ENCODE measurements at regions of chr10 and their contacts with region 1.

Region 1: GRCh38 chr10:118241229-118242137 is 100.6 kb downstream of the FAM204A start:
- DNase-seq: peak; percentile 72 to 83
- ATAC-seq: peak; percentile 62 to 86 (median 66)
- H3K4me3 ChIP-seq: no peak overlapping the region
- H3K27ac ChIP-seq: no peak overlapping the region
- H3K4me1 ChIP-seq: no peaks in the 10 kb centered on the region
- H3K27me3 ChIP-seq: peaks cover 3 to 63% (median 3%) of the 10 kb centered on the region in 3 donors
- CTCF ChIP-seq: peak; percentile 93

Region 2: DNA sequence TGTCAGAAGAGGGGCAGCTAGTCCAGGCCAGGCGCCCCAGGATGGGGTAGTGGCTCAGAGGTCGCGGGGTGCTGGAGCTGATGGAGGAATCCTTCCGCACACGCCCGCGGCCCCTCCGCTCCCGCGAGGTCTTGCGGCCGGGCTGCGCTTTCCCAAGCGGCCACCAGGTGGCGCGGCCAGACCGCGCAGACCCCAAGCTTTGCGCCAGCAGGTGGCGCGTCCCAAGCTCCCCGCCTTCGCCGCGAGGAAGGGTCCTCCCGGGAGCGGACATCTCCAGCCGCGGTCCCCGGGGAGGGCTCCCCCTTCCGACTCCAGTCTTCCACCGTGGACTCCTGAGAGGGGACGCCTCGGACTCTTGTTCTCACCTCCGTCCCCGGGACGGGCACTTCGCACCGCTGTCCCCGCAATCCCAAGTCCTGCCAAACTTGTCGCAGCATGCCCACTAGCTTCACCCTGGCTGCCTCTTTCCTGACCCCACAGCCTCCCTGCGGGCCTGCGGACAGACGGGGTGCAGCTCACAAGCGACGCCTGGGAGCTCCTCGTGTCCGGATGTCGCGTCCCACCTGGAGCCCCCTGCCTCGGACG is 1024.8 kb before region 1 on chr10:
- intact Hi-C with region 1: loop called (anchors 10 kb)
- DNase-seq: peak; percentile 66 to 84
- ATAC-seq: peak; percentile 88 to 98 (median 91)
- H3K4me3 ChIP-seq: peak overlapping the region; percentile 55
- H3K27ac ChIP-seq: no peak overlapping the region
- H3K4me1 ChIP-seq: peaks cover 5% of the 10 kb centered on the region
- H3K27me3 ChIP-seq: peaks cover 0 to 51% (median 18%) of the 10 kb centered on the region in 3 donors
- CTCF ChIP-seq: peak; percentile 100

Region 3: DNA sequence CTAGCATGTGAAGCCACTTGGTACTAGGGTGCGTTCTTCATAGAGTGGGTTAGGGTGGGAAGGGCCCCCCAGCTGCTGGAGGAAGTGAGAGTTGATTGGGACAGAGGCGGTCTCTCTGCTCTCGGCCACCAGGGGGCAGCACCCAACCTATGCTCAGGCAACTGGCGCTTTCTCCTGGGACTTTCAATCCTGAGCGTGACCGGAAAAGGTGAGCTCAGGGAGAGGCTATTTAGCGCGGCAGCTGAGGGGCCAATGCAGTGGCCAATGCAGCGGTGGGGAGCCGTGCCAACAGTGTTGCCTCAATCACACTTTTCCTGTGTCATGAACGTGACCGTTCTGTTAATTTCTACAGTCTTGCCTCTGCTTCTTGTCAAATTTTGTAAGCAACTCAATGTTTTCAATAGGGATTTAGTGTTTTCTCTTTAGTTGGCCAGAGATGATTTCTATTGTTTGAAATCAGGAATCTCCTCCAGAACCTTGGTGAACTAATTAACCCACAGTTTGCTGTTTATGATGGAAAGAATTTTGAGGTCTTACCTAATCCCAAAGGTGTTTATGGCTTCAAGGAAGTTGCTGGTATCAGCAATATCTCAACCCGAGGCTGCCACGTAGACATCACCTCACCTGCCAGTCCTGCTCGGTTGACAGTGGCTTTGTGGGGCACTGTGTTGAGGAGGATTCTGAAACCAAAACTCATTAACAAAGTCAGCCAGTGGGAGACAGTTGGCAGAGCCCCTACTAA is 798.4 kb before region 1 on chr10:
- intact Hi-C with region 1: loop called in 1 of 2 experiments (anchors 5 kb)
- DNase-seq: peak; percentile 80 to 90
- ATAC-seq: peak; percentile 73 to 83 (median 80)
- H3K4me3 ChIP-seq: peak overlapping the region; percentile 37
- H3K27ac ChIP-seq: no peak overlapping the region
- H3K4me1 ChIP-seq: no peaks in the 10 kb centered on the region
- H3K27me3 ChIP-seq: peaks cover 0 to 6% (median 3%) of the 10 kb centered on the region in 3 donors
- CTCF ChIP-seq: peak; percentile 77

Region 4: GRCh38 chr10:117496616-117497028 is 744.9 kb before region 1 on chr10:
- intact Hi-C with region 1: loop called (anchors 1 to 2 kb)
- DNase-seq: peak; percentile 70 to 85
- ATAC-seq: peak; percentile 88 to 97 (median 91)
- H3K4me3 ChIP-seq: no peak overlapping the region
- H3K27ac ChIP-seq: no peak overlapping the region
- H3K4me1 ChIP-seq: no peaks in the 10 kb centered on the region
- H3K27me3 ChIP-seq: peaks cover 0 to 9% (median 0%) of the 10 kb centered on the region in 3 donors
- CTCF ChIP-seq: peak; percentile 96

Region 5: DNA sequence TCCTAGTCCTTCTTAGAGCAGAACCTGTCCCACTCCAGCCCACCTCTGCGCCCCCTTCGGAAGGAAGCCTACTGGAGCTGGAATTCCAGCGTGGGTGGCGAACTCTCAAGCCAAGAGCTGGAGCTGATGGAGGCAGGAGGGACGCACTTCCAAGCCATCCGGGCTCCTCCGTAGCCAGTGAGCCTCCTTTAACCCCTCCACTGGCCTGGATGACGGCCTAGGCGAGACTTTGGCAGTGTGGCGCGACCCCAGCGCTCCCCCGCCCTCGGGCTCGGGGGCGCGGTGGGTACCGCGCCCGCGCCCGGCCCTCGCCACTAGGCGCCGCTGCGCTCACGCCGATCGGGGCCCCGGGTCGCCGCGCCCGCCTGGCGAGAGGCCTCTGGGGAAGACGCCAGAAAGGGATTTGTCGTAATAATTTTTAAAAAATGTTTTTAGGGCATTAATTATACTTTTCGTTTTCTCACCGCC is 704.0 kb before region 1 on chr10:
- intact Hi-C with region 1: loop called (anchors 5 kb)
- DNase-seq: peak in 1 of 2 donors; percentile 70
- ATAC-seq: peak; percentile 58 to 72 (median 63)
- H3K4me3 ChIP-seq: peak overlapping the region; percentile 56
- H3K27ac ChIP-seq: no peak overlapping the region
- H3K4me1 ChIP-seq: peaks cover 3% of the 10 kb centered on the region
- H3K27me3 ChIP-seq: peaks cover 0 to 98% (median 32%) of the 10 kb centered on the region in 3 donors
- CTCF ChIP-seq: peak; percentile 80

Region 6: GRCh38 chr10:118163217-118163616 is 78.3 kb before region 1 on chr10:
- intact Hi-C with region 1: no loop called
- DNase-seq: peak in 1 of 2 donors; percentile 65
- ATAC-seq: no peak
- H3K4me3 ChIP-seq: no peak overlapping the region
- H3K27ac ChIP-seq: no peak overlapping the region
- H3K4me1 ChIP-seq: no peaks in the 10 kb centered on the region
- H3K27me3 ChIP-seq: no peaks in the 10 kb centered on the region
- CTCF ChIP-seq: no peak

Region 7: DNA sequence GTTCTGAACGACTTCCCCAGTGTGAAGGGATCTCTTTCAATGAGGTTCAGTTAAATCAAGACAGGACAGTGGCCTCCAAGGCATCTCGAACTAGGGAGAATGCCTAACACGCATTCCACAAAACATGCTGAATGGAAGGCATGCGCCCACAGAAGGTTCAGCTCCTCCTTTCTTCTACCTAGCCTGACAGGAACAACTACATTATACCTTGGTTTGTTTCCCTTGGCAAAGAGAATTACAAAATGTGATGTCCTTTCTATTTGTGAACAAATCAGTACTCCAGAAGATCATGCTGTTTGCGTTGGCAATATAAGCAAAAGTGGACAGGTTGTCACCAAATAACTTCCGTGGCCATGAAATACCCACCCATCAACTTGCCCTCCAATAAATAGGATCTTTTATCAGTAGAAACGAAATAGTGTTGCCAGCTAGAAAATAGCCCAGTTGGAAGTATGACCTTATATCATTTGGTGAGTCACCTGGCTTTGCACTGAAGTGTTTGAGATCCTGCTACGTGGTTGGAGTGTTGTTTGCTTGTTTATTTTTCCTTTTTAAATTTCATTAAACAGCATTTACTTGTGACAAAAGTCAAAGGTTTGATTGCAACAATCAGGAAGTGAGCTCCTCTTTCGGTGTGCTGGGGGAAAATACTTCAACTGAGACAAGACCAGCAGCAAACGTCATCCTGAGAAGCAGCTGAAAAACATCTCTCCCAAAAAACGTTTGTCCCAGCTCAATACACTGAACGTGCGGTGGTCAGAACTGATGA is 217.7 kb after region 1 on chr10:
- intact Hi-C with region 1: no loop called
- DNase-seq: no peak
- ATAC-seq: no peak
- H3K4me3 ChIP-seq: no peak overlapping the region
- H3K27ac ChIP-seq: no peak overlapping the region
- H3K4me1 ChIP-seq: no peaks in the 10 kb centered on the region
- H3K27me3 ChIP-seq: no peaks in the 10 kb centered on the region
- CTCF ChIP-seq: no peak